Activated CD4-positive, alpha-beta memory T cell treated with anti-CD3 and anti-CD28 coated beads, Interleukin-2, amount 10 ng/mL, durations not matched to agents 7 days and 5 days (primary cell): ENCODE measurements at regions of chr15 and their contacts with region 1.

Region 1: GRCh38 chr15:66356345-66357236 is at the start of gene TIPIN:
- DNase-seq: peak; percentile 99
- H3K4me3 Mint-ChIP-seq: peak within 1 kb of the TSS; percentile 93
- H3K27ac Mint-ChIP-seq: peak within 1 kb of the TSS; percentile 93
- H3K4me1 Mint-ChIP-seq: peaks cover 37% of the 10 kb centered on the region
- H3K27me3 Mint-ChIP-seq: no peaks in the 10 kb centered on the region
- total RNA-seq, gene TIPIN: 27.2 to 28.9 TPM

Region 2: DNA sequence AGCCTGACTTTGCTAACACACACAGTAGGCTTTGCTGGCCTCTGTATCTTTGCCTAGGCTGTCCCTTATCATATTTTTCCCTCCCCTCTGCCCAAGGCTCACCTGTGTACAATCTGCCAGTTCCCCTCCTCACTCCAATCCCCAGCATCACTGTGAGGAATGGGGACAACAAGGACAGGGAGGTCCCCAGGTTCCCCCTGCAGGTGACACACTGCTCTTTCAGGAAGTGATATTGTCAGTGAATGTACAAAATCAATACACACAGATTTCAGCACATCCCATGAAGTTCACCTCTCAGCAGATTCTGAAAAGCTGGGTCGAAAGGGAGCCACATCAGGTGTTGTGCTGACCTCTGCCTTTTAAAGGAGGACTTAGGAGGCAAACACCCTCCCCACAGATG is 309.8 kb before region 1 on chr15:
- CTCF ChIA-PET with region 1: no interaction called
- POLR2A ChIA-PET with region 1: no interaction called
- DNase-seq: no peak
- H3K4me3 Mint-ChIP-seq: no peak overlapping the region
- H3K27ac Mint-ChIP-seq: no peak overlapping the region
- H3K4me1 Mint-ChIP-seq: no peaks in the 10 kb centered on the region
- H3K27me3 Mint-ChIP-seq: peaks cover 4% of the 10 kb centered on the region

Region 3: DNA sequence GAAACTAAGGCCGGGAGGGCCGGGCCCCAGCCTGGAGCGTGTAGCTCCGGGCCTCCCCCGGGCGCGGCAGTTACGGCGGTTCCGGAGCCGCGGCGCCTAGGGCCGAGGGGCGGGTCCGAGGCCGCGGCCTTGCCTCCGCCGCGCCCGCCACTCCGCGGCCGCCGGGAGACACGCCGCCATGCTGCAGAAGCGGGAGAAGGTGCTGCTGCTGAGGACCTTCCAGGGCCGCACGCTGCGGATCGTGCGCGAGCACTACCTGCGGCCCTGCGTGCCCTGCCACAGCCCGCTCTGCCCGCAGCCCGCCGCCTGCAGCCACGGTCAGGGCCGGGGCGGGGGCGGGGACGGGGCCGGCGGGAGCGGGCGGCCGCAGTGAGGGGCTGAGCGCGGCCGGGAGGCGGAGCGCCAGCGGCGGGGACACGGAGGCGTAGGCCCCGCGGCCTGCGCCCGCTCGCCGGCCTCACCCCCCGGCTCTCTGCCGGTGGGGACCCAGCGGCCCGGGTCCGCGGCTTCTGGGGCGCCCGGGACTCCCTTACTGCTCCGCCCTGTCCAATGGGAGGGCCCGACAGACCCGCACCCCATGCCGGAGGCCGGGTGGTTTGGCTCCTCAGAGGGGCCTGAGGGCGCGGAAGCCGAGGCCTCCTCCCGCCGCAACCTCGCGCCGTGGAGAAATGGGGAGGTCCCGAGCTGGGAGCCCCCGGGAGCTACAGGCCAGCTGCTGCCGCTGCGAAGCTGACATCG is 63.0 kb before region 1 on chr15 and contains the start of gene DIS3L:
- CTCF ChIA-PET with region 1: interaction called, 4 read pairs
- POLR2A ChIA-PET with region 1: interaction called, 34 read pairs
- DNase-seq: peak; percentile 68
- H3K4me3 Mint-ChIP-seq: peak within 1 kb of the TSS; percentile 83
- H3K27ac Mint-ChIP-seq: peak within 1 kb of the TSS; percentile 91
- H3K4me1 Mint-ChIP-seq: peaks cover 52% of the 10 kb centered on the region
- H3K27me3 Mint-ChIP-seq: no peaks in the 10 kb centered on the region
- total RNA-seq, gene DIS3L: 24.0 to 24.9 TPM

Region 4: DNA sequence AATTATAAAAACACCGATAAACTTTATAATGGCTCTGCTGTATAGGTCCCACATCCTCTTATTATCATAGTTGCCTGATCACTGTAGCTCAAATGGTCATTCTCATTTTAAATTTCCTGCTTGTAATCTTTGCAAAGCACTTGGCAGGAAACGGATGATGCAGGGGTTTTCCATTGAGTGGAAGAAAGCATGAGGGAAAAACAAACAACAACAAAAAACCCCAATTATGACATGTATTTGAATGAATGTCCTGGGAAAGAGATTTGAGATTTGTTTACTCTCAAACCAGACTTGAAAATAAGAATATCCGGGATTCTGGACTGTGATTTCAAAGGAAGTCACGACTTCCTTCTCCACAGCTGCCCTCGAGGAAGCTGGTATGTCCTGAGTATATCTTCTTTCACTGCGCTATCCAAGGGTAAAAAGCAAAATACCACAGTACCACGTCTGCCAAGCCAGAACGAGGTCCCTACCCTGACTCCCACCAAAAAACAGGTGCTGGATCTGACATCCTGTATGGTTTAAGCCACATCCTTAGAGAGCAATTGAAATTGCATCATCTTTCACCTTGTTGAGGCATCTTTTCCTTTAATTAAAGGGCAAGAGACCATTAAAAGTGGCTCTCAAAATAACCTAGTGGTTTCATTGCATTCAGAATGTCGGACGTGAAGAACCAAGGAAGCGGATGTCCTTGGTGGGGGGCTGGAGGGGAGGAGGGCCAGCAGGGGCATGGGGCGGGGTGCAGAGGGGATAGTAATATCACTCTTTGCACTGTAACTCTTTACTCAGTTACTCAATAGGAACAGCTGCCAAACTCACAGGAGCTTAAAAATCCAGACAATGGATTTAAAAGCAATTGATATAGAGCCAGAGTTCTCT is 13.4 kb after region 1 on chr15:
- CTCF ChIA-PET with region 1: interaction called, 3 read pairs
- POLR2A ChIA-PET with region 1: interaction called, 14 read pairs
- DNase-seq: peak; percentile 51
- H3K4me3 Mint-ChIP-seq: peak overlapping the region; percentile 54
- H3K27ac Mint-ChIP-seq: peak overlapping the region; percentile 80
- H3K4me1 Mint-ChIP-seq: peaks cover 22% of the 10 kb centered on the region
- H3K27me3 Mint-ChIP-seq: no peaks in the 10 kb centered on the region

Region 5: GRCh38 chr15:66504563-66505429 is 148.2 kb after region 1 on chr15 and contains the starts of genes RPL4 and ZWILCH:
- CTCF ChIA-PET with region 1: interaction called, 74 read pairs
- POLR2A ChIA-PET with region 1: interaction called, 55 read pairs
- DNase-seq: peak; percentile 84
- H3K4me3 Mint-ChIP-seq: peak within 1 kb of the TSS; percentile 92
- H3K27ac Mint-ChIP-seq: peak within 1 kb of the TSS; percentile 96
- H3K4me1 Mint-ChIP-seq: peaks cover 66% of the 10 kb centered on the region
- H3K27me3 Mint-ChIP-seq: no peaks in the 10 kb centered on the region
- total RNA-seq, gene RPL4: 2,309 to 2,338 TPM
- total RNA-seq, gene ZWILCH: 28.9 to 30.0 TPM